H1 (cell line): ENCODE measurements at regions of chr3 and their contacts with region 1.

Region 1: DNA sequence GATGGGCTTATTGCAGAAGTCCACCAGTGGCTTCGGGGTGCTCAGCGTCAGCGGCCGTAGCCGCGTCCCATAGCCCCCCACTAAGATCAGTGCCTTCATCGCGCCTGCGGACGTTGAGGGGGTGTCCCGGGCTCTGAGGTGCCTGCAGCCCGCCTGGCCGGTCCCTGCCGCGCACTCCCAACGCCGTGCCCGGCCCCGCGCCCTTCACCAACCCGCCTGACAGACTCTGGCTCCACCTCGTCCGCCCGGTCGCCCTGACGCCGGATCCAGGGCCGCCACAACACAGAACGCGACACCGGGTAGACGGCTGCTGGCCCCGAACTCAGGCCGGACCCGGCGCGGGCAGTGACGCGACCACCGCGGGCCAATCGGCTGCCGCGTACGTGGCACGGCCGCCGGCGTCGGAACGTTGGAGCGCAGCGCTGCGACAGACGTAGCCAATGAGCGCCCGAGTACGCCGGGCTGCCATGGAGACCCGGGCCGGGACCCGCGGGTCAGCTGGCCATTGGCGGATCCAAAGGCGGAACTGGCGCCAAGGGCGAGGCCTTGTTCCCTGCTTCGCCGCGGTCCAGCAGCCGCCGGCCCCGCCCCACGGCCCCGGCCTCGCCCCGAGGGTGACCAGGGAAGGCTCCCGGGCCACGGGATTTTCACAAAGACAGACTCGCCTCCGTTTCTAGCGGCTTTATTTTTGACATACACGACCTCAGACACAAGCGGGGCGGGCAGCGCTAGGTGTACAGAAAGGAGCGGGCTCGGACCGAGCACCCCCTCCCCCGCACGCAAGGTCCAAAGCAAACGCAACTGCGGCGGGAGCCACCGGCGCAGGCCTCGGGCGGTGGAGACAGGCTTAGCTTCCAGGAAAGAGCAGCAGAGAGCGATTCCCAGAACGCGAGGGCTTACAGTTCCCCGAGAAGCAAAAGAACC is at the start of gene GMPPB:
- DNase-seq: peak; percentile 91 to 97
- H3K4me3 ChIP-seq: peak within 1 kb of the TSS; percentile 72 to 97 (median 94)
- H3K27ac ChIP-seq: peak within 1 kb of the TSS; percentile 80
- H3K4me1 ChIP-seq: peaks cover 0 to 19% (median 8%) of the 10 kb centered on the region in 4 experiments; a peak in 6 of 7 replicates
- H3K27me3 ChIP-seq: no peaks in the 10 kb centered on the region
- CTCF ChIP-seq: no peak
- EP300 ChIP-seq: no peak
- POLR2A ChIP-seq: peak in 1 of 2 experiments; percentile 66; a peak in 1 of 3 replicates
- RAD21 ChIP-seq: no peak
- total RNA-seq, gene GMPPB: 23.9 and 24.0 TPM in 2 replicates

Region 2: GRCh38 chr3:49689046-49689907 is 34.6 kb before region 1 on chr3 and contains the starts of genes MST1 and RNF123:
- CTCF ChIA-PET with region 1: interaction called, 3 read pairs
- POLR2A ChIA-PET with region 1: interaction called, 12 read pairs
- DNase-seq: peak; percentile 81 to 98
- H3K4me3 ChIP-seq: peak within 1 kb of the TSS; percentile 81 to 98 (median 88)
- H3K27ac ChIP-seq: no peak within 1 kb of the TSS
- H3K4me1 ChIP-seq: peaks cover 0 to 8% (median 2%) of the 10 kb centered on the region in 4 experiments; a peak in 6 of 7 replicates
- H3K27me3 ChIP-seq: peaks cover 0 to 3% (median 3%) of the 10 kb centered on the region in 4 experiments; a peak in 2 of 7 replicates
- CTCF ChIP-seq: peak in 2 of 3 experiments; percentile 4 to 29; a peak in 2 of 4 replicates
- EP300 ChIP-seq: 0 out of 3 replicates have a peak, but pooled peaks of 1 of the 2 experiments have one; percentile 8
- POLR2A ChIP-seq: peak in 1 of 2 experiments; percentile 74; a peak in 2 of 3 replicates
- RAD21 ChIP-seq: no peak
- total RNA-seq, gene MST1: 6.2 and 8.5 TPM in 2 replicates
- total RNA-seq, gene RNF123: 30.5 and 34.2 TPM in 2 replicates

Region 3: DNA sequence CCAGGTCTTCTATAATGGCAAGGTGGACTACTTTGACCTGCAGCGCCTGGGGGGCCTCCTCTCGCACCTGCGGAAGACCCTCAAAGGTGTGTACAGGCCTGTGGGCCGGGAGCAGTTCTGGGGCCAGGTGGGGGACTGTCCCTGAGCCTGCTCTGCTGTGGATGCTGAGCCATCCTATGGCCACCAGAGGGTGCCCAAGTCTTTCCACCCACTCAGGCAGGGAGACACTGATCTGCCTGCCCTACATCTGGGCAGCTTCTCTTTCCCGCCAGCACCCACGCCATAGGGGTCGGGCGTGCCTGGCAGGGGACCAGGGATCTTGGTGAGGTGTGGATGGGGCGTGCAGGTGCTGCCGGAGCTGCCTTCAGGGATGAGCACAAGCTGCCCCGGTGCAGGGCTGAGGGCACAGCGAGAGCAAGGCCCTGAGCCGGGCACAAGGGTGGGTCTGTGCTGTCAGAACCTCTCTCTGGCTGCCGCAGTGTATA is 20.4 kb before region 1 on chr3:
- CTCF ChIA-PET with region 1: interaction called, 127 read pairs
- POLR2A ChIA-PET with region 1: interaction called, 57 read pairs
- DNase-seq: peak in 1 of 2 experiments; percentile 76
- H3K4me3 ChIP-seq: no peak overlapping the region
- H3K27ac ChIP-seq: no peak overlapping the region
- H3K4me1 ChIP-seq: peaks cover 0 to 9% (median 5%) of the 10 kb centered on the region in 4 experiments; a peak in 5 of 7 replicates
- H3K27me3 ChIP-seq: no peaks in the 10 kb centered on the region
- CTCF ChIP-seq: peak in 2 of 3 experiments; percentile 87 to 97; a peak in 3 of 4 replicates
- EP300 ChIP-seq: no peak
- POLR2A ChIP-seq: no peak
- RAD21 ChIP-seq: peak; percentile 88 to 91

Region 4: DNA sequence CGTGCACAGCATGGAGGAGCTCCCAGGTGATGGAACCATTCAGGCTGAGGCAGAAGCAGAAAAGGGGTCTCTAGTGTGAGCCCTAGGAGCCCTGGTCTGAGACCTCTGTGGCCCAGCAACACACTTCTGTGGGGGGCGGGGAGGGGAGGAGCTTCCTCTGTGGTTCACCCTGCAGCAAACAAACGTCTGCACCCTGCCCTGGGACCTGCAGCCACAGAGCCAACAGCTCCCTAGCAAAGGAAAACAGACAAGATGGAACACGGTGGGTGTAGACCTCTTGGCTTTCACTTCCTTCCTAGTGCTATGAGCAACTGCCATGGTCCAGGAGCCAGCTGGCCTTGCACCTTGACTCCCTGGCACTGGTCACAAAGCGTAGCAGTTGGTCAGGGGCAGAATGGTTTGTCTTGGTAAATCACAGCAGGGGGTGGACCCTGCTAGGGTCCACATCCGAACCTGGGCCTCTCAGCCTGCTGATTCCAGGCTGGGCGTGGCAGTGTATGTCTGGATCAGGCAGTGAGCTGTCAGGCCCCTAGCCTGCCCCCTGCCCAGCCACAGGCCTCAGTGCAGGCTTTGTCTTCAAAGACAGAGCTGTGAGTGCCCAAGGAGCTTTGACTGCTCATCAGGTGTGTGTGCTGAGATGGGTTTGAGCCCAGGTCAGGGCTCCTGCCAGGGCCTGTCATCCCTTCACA is 11.1 kb before region 1 on chr3:
- CTCF ChIA-PET with region 1: interaction called, 11 read pairs
- POLR2A ChIA-PET with region 1: interaction called, 41 read pairs
- DNase-seq: no peak
- H3K4me3 ChIP-seq: no peak overlapping the region
- H3K27ac ChIP-seq: peak overlapping the region; percentile 1; the same call in 1 of the 2 replicates
- H3K4me1 ChIP-seq: peaks cover 0 to 3% (median 0%) of the 10 kb centered on the region in 4 experiments; a peak in 2 of 7 replicates
- H3K27me3 ChIP-seq: no peaks in the 10 kb centered on the region
- CTCF ChIP-seq: peak in 1 of 3 experiments; percentile 4; a peak in 1 of 4 replicates
- EP300 ChIP-seq: no peak
- POLR2A ChIP-seq: no peak
- RAD21 ChIP-seq: no peak; a peak in 1 of 4 replicates

Region 5: DNA sequence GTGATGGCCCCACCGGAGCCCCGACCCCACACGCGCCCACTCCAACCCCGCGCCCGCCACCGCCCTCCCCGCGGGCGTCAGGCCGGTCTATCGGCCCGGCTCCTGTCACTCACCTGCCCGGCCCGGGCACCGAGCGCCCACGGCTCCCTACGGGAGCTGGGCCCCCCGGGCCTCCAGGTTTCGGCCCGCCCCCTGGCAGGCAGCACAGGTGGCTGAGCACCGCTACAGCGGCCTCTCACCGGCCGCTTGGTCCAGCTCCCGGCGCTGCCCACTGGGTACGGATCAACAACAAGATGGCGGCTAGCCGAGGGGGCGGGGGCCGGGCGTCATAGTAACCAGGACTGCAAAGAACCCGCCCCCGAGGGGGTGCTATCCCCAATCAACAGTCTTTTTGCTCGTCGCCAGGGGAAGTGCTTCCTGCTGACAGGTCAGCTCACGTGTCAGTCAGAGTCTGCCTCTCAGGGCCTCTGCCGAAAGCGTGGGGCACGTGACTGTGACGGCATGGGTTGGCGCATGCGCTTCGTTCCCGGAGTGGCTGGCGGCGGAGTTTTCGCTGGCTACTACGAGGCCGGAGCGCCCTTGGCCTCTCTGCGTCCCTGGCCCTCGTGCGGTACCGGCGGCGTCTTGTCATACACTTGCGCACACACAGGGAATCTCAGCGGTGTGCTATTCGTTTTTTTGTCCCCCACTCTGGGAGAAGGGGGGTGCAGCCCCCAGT is 62.5 kb after region 1 on chr3 and contains the start of gene IP6K1:
- CTCF ChIA-PET with region 1: interaction called, 4 read pairs
- POLR2A ChIA-PET with region 1: interaction called, 18 read pairs
- DNase-seq: peak; percentile 99
- H3K4me3 ChIP-seq: peak within 1 kb of the TSS; percentile 75 to 95 (median 86)
- H3K27ac ChIP-seq: peak within 1 kb of the TSS; percentile 74
- H3K4me1 ChIP-seq: peaks cover 0 to 5% (median 2%) of the 10 kb centered on the region in 4 experiments; a peak in 2 of 7 replicates
- H3K27me3 ChIP-seq: peaks cover 0 to 2% (median 0%) of the 10 kb centered on the region in 4 experiments; a peak in 2 of 7 replicates
- CTCF ChIP-seq: no peak
- EP300 ChIP-seq: no peak
- POLR2A ChIP-seq: peak in 1 of 2 experiments; percentile 67; a peak in 2 of 3 replicates
- RAD21 ChIP-seq: no peak
- total RNA-seq, gene IP6K1: 35.2 and 36.3 TPM in 2 replicates

Region 6: DNA sequence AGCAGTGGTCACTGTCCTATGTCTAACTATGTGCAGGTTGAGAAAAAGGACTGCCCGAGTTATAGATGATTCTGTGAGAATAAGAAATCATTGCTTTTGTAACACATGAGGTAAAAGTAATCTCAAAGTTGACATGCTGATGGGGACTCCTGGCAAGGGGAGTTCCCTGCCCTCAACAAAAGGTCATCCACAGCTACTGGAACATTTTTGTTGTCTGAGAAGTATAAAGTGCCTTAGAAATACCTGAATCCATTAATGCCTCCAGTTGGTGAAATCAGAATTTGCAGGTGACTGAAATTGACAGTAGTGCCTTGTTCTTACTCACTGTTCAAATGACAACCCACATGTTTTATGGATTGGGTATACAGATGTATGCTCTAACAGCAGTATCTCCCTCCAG is 321.1 kb after region 1 on chr3:
- CTCF ChIA-PET with region 1: no interaction called
- POLR2A ChIA-PET with region 1: no interaction called
- DNase-seq: no peak
- H3K4me3 ChIP-seq: no peak overlapping the region
- H3K27ac ChIP-seq: no peak overlapping the region
- H3K4me1 ChIP-seq: no peaks in the 10 kb centered on the region
- H3K27me3 ChIP-seq: no peaks in the 10 kb centered on the region
- CTCF ChIP-seq: no peak
- EP300 ChIP-seq: no peak
- POLR2A ChIP-seq: no peak
- RAD21 ChIP-seq: no peak

Region 7: GRCh38 chr3:50154840-50155474 is 431.1 kb after region 1 on chr3 and contains the start of gene SEMA3F:
- CTCF ChIA-PET with region 1: no interaction called
- POLR2A ChIA-PET with region 1: no interaction called
- DNase-seq: peak in 1 of 2 experiments; percentile 83
- H3K4me3 ChIP-seq: peak within 1 kb of the TSS; percentile 69 to 78 (median 72)
- H3K27ac ChIP-seq: no peak within 1 kb of the TSS
- H3K4me1 ChIP-seq: peaks cover 5 to 55% (median 40%) of the 10 kb centered on the region in 4 experiments
- H3K27me3 ChIP-seq: peaks cover 2 to 19% (median 15%) of the 10 kb centered on the region in 4 experiments; a peak in 6 of 7 replicates
- CTCF ChIP-seq: no peak; a peak in 1 of 4 replicates
- EP300 ChIP-seq: no peak
- POLR2A ChIP-seq: no peak
- RAD21 ChIP-seq: no peak; a peak in 1 of 4 replicates
- total RNA-seq, gene SEMA3F: 37.0 and 39.6 TPM in 2 replicates